ENCODE measurements at regions of chr2 and their contacts with region 1.

Region 1: DNA sequence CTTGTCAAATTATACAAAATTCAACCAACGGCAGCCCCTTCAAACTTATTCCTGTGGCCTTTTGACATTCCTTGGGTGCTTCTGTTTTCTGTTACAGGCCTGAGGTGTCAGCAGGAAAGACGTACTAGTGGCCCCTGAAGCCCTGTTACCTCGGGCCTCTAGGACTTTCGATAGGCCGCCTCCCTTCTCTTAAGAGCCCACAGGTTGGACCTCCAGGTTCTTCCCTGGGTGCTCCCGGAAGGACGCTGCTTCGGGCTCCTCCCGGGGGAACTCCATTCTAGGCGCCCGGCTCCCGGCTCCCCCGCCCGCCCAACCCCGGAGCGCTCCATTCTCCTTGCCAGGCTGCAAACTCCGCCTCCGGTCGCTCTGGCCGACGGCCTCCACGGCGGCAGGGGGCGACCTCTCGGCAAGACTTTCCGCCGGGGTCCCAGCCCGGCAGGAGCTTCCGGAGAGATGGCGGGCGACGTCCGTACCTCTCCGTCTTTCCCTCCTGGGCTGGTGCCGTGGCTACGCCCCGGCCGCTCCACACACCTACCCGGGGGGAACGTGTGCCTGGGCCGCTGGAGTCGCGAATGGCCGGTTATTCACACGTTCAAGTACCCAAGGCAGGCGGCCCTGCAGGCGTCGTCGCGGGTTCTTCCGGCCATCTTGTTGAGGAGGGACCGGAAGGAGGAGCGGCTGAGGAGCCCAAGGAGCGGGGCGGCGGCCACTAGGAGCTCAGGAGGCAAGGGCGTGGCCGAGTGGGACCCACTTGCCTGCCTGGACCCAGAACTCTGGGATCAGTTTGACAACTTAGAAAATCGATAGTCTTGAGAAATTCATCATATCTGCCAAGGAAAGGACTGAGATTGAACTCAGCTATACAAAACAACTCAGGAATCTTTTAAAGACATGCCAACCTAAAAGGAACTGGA is 27.5 kb downstream of the BOLA3 start:
- DNase-seq: peak; percentile 89 to 90 (median 89)
- H3K4me3 ChIP-seq: peak overlapping the region; percentile 78 to 93 (median 86)
- H3K27ac ChIP-seq: peak overlapping the region; percentile 79 to 87
- H3K4me1 ChIP-seq: peaks cover 0 to 6% (median 5%) of the 10 kb centered on the region in 4 experiments
- H3K27me3 ChIP-seq: no peaks in the 10 kb centered on the region

Region 2: DNA sequence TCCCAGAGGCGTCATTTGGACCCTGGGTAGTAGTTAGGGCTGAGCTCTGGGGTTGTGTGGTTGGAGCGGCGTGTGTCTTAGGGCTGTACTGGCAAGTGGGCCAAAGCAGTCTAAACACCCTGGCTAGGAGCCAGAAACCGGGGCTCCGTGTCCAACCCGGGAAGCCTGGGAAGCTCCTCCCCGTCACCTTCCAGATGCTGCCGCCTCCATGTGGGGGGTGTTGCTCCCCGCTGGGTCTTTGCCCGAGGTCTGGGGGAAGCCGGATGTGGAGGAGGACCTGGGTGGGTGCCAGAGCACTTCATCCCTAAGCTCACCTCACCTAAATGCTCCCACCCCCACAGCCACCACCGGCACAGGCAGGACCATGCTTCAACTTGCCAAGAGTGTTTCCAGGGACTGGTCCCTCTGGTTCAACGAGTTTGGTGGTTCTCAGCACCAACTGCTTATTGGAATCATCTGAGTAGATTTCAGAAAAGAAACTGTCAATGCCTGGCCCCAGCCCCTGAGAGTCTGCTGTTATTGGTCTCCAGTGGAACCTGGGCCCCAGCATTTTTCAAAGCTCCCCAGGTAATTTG is 110.0 kb before region 1 on chr2:
- CTCF ChIA-PET with region 1: no interaction called
- POLR2A ChIA-PET with region 1: no interaction called
- DNase-seq: no peak
- H3K4me3 ChIP-seq: no peak overlapping the region
- H3K27ac ChIP-seq: peak overlapping the region in 1 of 2 experiments; percentile 1
- H3K4me1 ChIP-seq: no peaks in the 10 kb centered on the region
- H3K27me3 ChIP-seq: no peaks in the 10 kb centered on the region

Region 3: DNA sequence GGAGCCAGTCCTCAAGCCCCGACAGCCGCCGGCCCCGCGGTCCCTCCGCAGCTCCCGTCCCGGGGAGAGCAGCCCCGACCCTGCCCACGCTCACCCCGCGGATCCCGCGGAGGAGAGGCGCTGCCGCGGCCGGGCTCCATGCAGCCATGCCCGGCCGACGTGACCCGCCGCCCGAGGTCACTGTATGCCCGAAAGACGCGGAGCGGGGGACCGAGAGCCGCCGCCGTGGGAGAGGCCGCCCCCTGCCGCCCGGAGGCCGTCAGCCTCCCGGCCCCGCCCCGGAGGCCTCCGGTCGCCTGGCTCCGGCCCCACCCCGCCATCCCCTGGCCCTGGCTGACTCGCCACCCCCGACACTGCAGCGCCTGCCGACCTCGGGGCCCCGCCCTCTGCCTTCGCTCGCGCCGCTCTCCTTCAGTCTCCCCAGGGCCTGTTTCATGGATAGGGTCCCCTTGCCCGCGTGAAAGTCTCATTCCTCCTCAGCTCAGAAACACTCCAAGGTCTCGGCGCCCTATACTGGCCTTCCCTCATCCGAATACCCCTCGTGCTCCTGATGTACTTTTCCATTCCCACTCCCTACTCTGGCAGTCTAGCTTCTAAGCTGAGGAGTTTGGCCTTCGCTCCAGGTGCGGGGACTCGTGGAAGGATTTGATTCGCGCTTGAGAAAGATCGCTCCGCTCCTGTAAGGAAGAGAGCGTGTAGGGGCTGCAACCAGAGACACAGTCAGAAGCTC is 27.7 kb after region 1 on chr2 and contains the start of gene BOLA3:
- CTCF ChIA-PET with region 1: interaction called, 32 read pairs
- POLR2A ChIA-PET with region 1: no interaction called
- DNase-seq: peak; percentile 79 to 90 (median 87)
- H3K4me3 ChIP-seq: peak within 1 kb of the TSS; percentile 71 to 94 (median 84)
- H3K27ac ChIP-seq: peak within 1 kb of the TSS in 1 of 2 experiments; percentile 73
- H3K4me1 ChIP-seq: peaks cover 7 to 31% (median 21%) of the 10 kb centered on the region in 4 experiments
- H3K27me3 ChIP-seq: no peaks in the 10 kb centered on the region